ENCODE measurements at regions of chr4 and their contacts with region 1.

Region 1: DNA sequence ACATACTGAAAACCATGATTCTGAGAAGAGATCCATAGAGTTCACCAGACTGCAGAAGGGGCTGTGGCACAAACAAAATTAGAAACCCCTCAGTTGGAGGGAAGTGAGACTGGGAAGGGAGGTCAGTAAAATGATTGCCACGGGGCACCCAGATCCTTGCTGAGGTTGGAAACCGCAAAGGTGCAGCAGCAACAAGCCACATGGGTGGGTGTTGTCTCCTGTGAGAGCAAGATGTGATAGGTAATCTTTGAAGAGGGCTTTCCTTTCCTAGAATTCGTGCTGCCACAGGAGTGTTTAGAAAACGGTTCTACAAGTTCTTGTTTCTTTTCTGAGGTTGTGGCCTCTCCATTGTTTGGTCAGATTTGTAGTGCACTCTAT is 85.5 kb downstream of the NFKB1 start:
- DNase-seq: peak; percentile 59
- H3K4me3 Mint-ChIP-seq: peak overlapping the region; percentile 27
- H3K27ac Mint-ChIP-seq: peak overlapping the region; percentile 75
- H3K4me1 Mint-ChIP-seq: peaks cover 73% of the 10 kb centered on the region
- H3K27me3 Mint-ChIP-seq: no peaks in the 10 kb centered on the region

Region 2: DNA sequence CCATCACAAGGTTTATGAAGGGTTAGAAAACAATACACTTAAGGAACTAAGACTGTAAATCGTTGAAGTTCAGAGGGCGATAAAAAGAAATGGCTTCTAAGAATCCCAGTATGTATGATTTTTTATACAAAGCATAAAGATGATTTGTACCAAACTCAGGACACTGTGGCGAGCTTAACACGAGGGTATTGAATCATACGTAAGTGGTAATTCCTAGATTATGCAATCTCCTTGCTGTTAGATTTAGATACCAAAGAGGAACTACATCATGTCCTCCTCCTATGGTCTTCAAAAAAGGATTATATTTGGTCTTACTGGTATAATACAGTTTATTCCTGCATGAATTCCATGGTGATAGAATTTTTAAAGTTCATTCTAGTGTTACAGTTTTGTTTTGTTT is 61.5 kb before region 1 on chr4:
- intact Hi-C with region 1: loop called (anchors 2 kb)
- DNase-seq: no peak
- H3K4me3 Mint-ChIP-seq: no peak overlapping the region
- H3K27ac Mint-ChIP-seq: peak overlapping the region; percentile 53
- H3K4me1 Mint-ChIP-seq: peaks cover 83% of the 10 kb centered on the region
- H3K27me3 Mint-ChIP-seq: no peaks in the 10 kb centered on the region

Region 3: DNA sequence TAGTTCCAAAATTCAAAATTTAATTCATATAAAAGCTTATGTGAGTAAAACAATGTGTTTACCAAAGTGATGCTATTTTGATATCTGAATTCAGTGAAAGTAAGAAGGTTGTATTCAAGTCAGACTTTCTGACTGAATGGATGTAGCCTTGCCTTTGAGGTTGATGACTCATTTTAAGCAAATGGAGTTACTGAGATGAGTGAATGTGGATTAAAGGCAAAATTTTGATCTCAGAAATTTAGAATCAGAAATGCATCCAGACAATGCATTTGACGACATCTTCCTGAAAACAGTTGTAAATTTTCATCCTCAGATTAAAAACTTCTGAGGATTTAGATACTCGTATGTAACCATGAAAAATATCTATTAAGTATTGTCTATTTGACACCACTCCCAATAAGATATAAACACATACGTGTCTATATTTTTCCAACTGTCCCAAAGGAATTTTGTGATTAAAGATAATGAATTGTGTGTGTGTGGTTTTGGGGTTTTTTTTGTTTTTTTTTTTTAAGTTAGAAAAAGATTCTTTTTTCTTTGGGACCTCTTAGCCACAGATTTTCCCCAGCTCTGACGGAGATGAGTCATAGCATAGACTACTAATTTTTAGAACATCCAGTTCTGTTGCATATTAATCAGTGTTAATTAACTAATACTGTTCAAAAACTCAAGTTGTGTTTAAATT is 51.1 kb before region 1 on chr4:
- intact Hi-C with region 1: loop called (anchors 2 kb)
- DNase-seq: no peak
- H3K4me3 Mint-ChIP-seq: peak overlapping the region; percentile 5
- H3K27ac Mint-ChIP-seq: peak overlapping the region; percentile 55
- H3K4me1 Mint-ChIP-seq: peaks cover 54% of the 10 kb centered on the region
- H3K27me3 Mint-ChIP-seq: no peaks in the 10 kb centered on the region

Region 4: DNA sequence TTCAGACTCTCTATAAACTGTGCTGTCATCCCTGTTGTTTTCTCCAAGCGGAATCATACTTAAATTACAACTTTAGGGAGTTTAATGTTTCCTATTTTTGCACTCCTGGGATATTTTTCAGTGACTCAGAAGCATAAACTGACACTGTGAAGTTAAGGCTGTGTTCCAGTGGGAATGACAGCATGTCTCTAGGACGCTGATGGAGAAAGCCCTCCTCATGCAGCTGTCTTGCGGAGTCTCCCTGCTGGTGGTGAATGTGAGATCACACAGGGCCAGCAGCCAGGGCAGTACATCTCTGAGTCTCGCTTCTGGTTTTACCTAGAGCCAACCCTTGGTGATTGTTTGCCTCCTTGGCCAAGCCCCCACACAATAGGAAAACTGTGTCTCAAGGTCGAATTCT is 32.2 kb before region 1 on chr4:
- intact Hi-C with region 1: loop called (anchors 5 kb)
- DNase-seq: no peak
- H3K4me3 Mint-ChIP-seq: no peak overlapping the region
- H3K27ac Mint-ChIP-seq: no peak overlapping the region
- H3K4me1 Mint-ChIP-seq: peaks cover 47% of the 10 kb centered on the region
- H3K27me3 Mint-ChIP-seq: no peaks in the 10 kb centered on the region

Region 5: DNA sequence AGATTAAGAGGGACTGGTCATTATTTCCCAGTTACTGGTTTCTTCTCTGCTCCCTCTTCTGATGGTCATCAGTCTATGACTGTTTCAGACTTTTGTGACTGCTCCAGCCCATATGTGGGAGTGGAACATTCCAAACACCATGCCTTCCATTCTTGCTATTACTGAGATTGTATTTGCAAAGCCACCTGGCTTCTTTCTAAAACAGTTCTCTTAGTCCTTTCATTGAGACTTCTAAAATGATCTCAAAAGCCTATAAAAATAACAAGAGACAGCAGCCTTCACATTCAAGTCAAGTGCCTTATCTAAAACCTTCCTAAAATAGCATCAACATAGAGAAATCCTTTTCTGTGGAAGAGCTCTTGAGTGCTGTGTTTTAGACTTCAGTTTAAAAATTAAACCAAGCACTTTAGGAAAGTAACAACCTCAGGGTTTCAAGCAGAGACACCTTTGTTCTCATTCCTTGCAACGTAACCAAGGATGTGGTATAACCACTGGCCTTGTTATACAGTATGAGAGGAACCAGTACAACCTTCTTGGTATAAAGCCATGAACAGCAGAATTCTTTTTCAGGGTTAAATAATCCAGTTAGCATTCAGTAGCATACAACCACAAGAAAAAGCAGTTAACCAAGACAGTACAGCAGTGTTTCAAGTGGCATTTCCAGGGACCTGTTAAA is 11.6 kb after region 1 on chr4:
- intact Hi-C with region 1: loop called (anchors 1 kb)
- DNase-seq: no peak
- H3K4me3 Mint-ChIP-seq: peak overlapping the region; percentile 57
- H3K27ac Mint-ChIP-seq: peak overlapping the region; percentile 89
- H3K4me1 Mint-ChIP-seq: peaks cover 64% of the 10 kb centered on the region
- H3K27me3 Mint-ChIP-seq: no peaks in the 10 kb centered on the region

Region 6: DNA sequence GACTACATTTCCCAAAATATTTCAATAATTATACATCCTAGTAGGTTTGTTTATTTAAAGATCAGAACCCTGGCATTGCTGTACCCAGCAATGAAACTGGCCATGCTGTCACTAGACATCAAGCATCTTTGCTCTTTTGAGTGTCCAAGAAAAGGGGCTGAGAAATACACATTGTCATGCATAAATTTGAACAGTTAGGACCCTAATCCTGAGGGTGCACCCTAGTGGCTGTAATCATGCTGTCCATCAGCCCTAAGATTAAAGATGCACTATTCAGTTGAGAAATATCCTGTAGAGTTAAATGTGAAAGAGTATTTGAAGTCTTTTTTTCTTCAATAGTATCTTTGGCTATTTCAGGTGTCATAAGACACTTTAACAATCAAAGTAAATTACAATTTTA is 23.4 kb after region 1 on chr4:
- intact Hi-C with region 1: loop called (anchors 2 kb)
- DNase-seq: no peak
- H3K4me3 Mint-ChIP-seq: no peak overlapping the region
- H3K27ac Mint-ChIP-seq: peak overlapping the region; percentile 39
- H3K4me1 Mint-ChIP-seq: peaks cover 76% of the 10 kb centered on the region
- H3K27me3 Mint-ChIP-seq: no peaks in the 10 kb centered on the region

Region 7: GRCh38 chr4:102620697-102621497 is 34.3 kb after region 1 on chr4:
- intact Hi-C with region 1: loop called (anchors 5 kb)
- DNase-seq: no peak
- H3K4me3 Mint-ChIP-seq: no peak overlapping the region
- H3K27ac Mint-ChIP-seq: peak overlapping the region; percentile 58
- H3K4me1 Mint-ChIP-seq: peaks cover 49% of the 10 kb centered on the region
- H3K27me3 Mint-ChIP-seq: no peaks in the 10 kb centered on the region

Region 8: GRCh38 chr4:103150677-103151076 is 564.0 kb after region 1 on chr4:
- intact Hi-C with region 1: no loop called
- DNase-seq: no peak
- H3K4me3 Mint-ChIP-seq: no peak overlapping the region
- H3K27ac Mint-ChIP-seq: no peak overlapping the region
- H3K4me1 Mint-ChIP-seq: peaks cover 25% of the 10 kb centered on the region
- H3K27me3 Mint-ChIP-seq: no peaks in the 10 kb centered on the region

Measured in activated T-helper 2 cell treated with anti-CD3 and anti-CD28 coated beads, Interferon-gamma antibody, Interleukin-2, Interleukin-4, amounts not matched to agents 10 μg/mL and 5 μg/mL and 100 μg/mL, durations not matched to agents 14 hours and 24 hours and 36 hours (primary cell).